CD8-positive, alpha-beta memory T cell (primary cell): ENCODE measurements at regions of chr1 and their contacts with region 1.

Region 1: DNA sequence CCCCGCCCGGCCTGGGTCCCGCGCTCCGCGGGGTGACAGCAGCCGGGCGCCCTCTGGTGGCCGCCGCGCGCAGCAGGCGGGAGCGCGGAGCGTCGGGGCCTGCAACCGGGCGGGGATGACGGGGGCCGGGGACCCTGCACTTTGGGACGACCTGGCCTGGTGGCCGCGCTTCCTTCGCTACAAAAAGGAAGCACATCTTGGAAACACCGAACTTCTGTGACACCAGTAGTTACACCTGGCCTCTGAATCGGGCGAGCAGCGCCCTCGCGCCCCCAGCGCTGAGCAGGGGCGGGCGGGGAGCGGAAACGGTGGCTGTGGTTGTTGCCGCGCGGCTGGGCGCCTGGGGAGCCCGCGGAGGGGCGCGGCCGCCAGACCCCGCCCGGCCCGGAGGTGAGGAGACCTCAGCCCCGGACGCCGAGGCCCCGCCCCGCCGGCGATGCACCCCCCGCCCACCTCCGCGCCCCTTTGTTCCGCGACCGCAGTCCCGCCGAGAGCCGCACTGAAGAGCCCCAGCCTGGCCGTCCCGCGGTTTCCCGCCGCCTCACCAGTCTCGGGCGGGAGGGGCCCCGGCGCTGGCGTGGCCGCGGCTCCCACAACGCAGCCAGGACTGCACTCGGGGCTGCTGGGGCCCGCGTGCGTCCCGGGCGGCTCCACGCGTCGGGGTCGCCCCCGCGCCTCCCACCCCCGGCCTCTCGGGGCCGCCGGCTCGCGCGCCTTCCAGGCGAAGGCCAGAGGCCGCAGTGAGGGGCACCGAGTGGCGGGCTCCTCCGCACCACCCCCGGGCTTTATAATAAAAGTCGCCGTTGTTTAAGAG is 59.3 kb downstream of the H3-3A start:
- DNase-seq: peak; percentile 70 to 85 (median 79)
- H3K4me3 ChIP-seq: peak overlapping the region; percentile 58
- H3K4me3 Mint-ChIP-seq: peak overlapping the region; percentile 65 to 94 (median 88)
- H3K27ac ChIP-seq: peak overlapping the region; percentile 54
- H3K27ac Mint-ChIP-seq: peak overlapping the region in 5 of 8 donors; percentile 73 to 98 (median 93)
- H3K4me1 ChIP-seq: peaks cover 25% of the 10 kb centered on the region
- H3K4me1 Mint-ChIP-seq: peaks cover 18 to 36% (median 26%) of the 10 kb centered on the region in 3 donors
- H3K27me3 ChIP-seq: no peaks in the 10 kb centered on the region
- H3K27me3 Mint-ChIP-seq: peaks cover 2 to 4% of the 10 kb centered on the region in 2 donors

Region 2: DNA sequence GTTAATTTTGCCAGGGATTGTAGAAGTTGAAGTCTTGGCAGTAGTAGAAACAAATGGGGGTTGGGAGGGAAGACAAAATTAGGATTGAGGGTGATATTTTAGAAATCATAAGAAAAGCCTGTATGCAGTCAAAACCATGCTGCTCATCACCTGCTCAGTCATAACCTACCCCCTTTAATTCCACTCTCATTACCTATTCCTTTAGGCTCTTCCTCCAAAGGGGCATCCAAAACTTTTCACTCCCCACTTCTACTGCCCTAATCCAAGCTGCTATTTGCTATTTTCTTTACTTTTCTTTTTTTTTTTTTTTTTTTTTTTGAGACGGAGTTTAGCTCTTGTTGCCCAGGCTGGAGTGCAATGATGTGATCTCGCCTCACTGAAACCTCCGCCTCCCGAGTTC is 47.7 kb before region 1 on chr1:
- CTCF ChIA-PET with region 1: interaction called, 11 read pairs
- POLR2A ChIA-PET with region 1: no interaction called
- DNase-seq: no peak
- H3K4me3 ChIP-seq: no peak overlapping the region
- H3K4me3 Mint-ChIP-seq: peak overlapping the region in 1 of 7 donors; percentile 4
- H3K27ac ChIP-seq: no peak overlapping the region
- H3K27ac Mint-ChIP-seq: peak overlapping the region in 4 of 8 donors; percentile 12 to 72 (median 32)
- H3K4me1 ChIP-seq: peaks cover 10% of the 10 kb centered on the region
- H3K4me1 Mint-ChIP-seq: peaks cover 21 to 32% (median 26%) of the 10 kb centered on the region in 3 donors
- H3K27me3 ChIP-seq: no peaks in the 10 kb centered on the region
- H3K27me3 Mint-ChIP-seq: no peaks in the 10 kb centered on the region

Region 3: GRCh38 chr1:226109829-226110248 is 12.0 kb before region 1 on chr1:
- CTCF ChIA-PET with region 1: interaction called, 19 read pairs
- POLR2A ChIA-PET with region 1: interaction called, 18 read pairs
- DNase-seq: peak; percentile 64 to 81 (median 73)
- H3K4me3 ChIP-seq: peak overlapping the region; percentile 56
- H3K4me3 Mint-ChIP-seq: peak overlapping the region; percentile 88 to 94 (median 92)
- H3K27ac ChIP-seq: peak overlapping the region; percentile 79
- H3K27ac Mint-ChIP-seq: peak overlapping the region; percentile 79 to 94 (median 90)
- H3K4me1 ChIP-seq: peaks cover 10% of the 10 kb centered on the region
- H3K4me1 Mint-ChIP-seq: peaks cover 12 to 20% (median 13%) of the 10 kb centered on the region in 3 donors
- H3K27me3 ChIP-seq: no peaks in the 10 kb centered on the region
- H3K27me3 Mint-ChIP-seq: peaks cover 0 to 3% of the 10 kb centered on the region in 2 donors

Region 4: DNA sequence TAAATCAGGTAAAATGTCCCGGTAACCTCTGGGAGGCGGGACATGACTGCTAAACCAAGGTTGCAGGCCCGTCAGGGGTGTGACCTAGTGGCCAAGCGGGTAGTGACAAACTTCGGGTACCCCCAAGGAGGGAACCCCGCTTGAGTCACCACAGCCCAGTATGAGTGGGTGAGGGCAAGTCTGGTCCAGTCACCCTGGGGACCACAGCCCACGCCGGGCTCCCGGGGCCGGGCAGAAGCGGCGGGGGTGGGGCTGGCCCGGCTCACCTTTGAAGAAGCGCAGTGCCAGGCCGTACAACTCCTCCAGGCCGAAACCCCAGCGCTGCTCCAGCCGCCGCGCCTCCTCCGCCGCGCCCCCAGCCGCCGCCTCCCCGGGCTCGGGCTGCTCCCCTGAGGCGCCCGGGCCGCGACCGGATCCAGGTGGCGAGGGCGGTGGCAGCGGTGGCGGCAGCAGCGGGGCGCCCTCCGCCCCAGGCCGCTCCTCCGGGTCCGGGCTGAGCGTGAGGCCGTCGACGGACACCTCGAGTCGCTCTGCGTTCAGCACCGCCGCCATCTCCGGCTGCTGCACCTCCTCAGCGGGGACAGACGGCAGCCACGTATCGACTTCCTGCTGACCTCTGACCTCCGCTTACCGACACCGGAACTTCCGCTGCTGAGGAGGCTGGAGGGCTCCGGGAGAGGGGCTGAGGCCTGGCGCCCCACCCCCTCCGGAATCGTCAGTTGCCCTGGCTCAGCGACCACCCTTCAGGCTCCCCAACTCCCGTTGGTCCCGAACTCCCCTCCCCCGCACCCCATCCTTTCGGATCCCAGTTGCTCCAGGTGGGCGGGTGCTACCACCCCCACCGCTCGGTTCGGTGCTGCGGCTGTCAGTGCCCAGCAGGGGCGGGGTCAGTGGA is 64.6 kb after region 1 on chr1 and contains the start of gene ACBD3:
- CTCF ChIA-PET with region 1: interaction called, 17 read pairs
- POLR2A ChIA-PET with region 1: no interaction called
- DNase-seq: peak; percentile 74 to 91 (median 82)
- H3K4me3 ChIP-seq: peak within 1 kb of the TSS; percentile 97
- H3K4me3 Mint-ChIP-seq: peak within 1 kb of the TSS; percentile 91 to 98 (median 95)
- H3K27ac ChIP-seq: peak within 1 kb of the TSS; percentile 90
- H3K27ac Mint-ChIP-seq: peak within 1 kb of the TSS; percentile 89 to 98 (median 95)
- H3K4me1 ChIP-seq: peaks cover 19% of the 10 kb centered on the region
- H3K4me1 Mint-ChIP-seq: peaks cover 37 to 49% (median 42%) of the 10 kb centered on the region in 3 donors
- H3K27me3 ChIP-seq: no peaks in the 10 kb centered on the region
- H3K27me3 Mint-ChIP-seq: no peaks in the 10 kb centered on the region
- total RNA-seq, gene ACBD3: 20.4 to 21.5 TPM

Region 5: GRCh38 chr1:226327761-226328162 is 206.0 kb after region 1 on chr1:
- CTCF ChIA-PET with region 1: interaction called, 45 read pairs
- POLR2A ChIA-PET with region 1: interaction called, 15 read pairs
- DNase-seq: no peak
- H3K4me3 ChIP-seq: no peak overlapping the region
- H3K4me3 Mint-ChIP-seq: no peak overlapping the region
- H3K27ac ChIP-seq: no peak overlapping the region
- H3K27ac Mint-ChIP-seq: peak overlapping the region in 1 of 8 donors; percentile 19
- H3K4me1 ChIP-seq: no peaks in the 10 kb centered on the region
- H3K4me1 Mint-ChIP-seq: peaks cover 0 to 2% (median 1%) of the 10 kb centered on the region in 3 donors
- H3K27me3 ChIP-seq: no peaks in the 10 kb centered on the region
- H3K27me3 Mint-ChIP-seq: peaks cover 5 to 12% of the 10 kb centered on the region in 2 donors

Region 6: GRCh38 chr1:226407497-226408284 is 285.9 kb after region 1 on chr1 and contains the start of gene PARP1:
- CTCF ChIA-PET with region 1: interaction called, 11 read pairs
- POLR2A ChIA-PET with region 1: no interaction called
- DNase-seq: peak; percentile 83 to 92 (median 89)
- H3K4me3 ChIP-seq: peak within 1 kb of the TSS; percentile 56
- H3K4me3 Mint-ChIP-seq: peak within 1 kb of the TSS; percentile 92 to 99 (median 96)
- H3K27ac ChIP-seq: peak within 1 kb of the TSS; percentile 71
- H3K27ac Mint-ChIP-seq: peak within 1 kb of the TSS; percentile 87 to 99 (median 96)
- H3K4me1 ChIP-seq: peaks cover 42% of the 10 kb centered on the region
- H3K4me1 Mint-ChIP-seq: peaks cover 40 to 55% (median 48%) of the 10 kb centered on the region in 3 donors
- H3K27me3 ChIP-seq: no peaks in the 10 kb centered on the region
- H3K27me3 Mint-ChIP-seq: no peaks in the 10 kb centered on the region
- total RNA-seq, gene PARP1: 224 to 234 TPM